HepG2 (cell line): ENCODE measurements at regions of chr14 and their contacts with region 1.

Region 1: DNA sequence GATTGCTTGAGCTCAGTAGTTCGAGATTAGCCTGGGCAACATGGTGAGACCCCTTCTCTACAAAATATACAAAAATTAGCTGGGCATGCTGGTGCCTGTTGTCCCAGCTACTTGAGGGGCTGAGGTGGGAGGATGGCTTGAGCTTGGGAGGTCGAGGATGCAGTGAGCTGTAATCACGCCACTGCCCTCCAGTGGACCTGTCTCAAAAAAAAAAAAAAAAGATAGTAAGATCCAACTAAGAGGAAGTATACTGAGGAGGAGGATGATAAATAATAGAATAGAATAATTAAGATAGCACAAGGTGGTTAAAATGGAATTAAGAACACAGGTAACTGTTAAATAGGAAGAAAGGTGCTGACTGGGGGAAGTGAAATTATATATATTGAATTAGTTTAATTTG is 37.0 kb upstream of the BAZ1A start:
- DNase-seq: peak; percentile 34
- ATAC-seq: peak; percentile 71
- H3K4me3 ChIP-seq: no peak overlapping the region
- H3K27ac ChIP-seq: no peak overlapping the region
- H3K4me1 ChIP-seq: no peaks in the 10 kb centered on the region
- H3K27me3 ChIP-seq: no peaks in the 10 kb centered on the region
- CTCF ChIP-seq: peak; percentile 48
- EP300 ChIP-seq: no peak
- POLR2A ChIP-seq: no peak
- RAD21 ChIP-seq: 0 out of 2 replicates have a peak, but pooled peaks have one; percentile 7

Region 2: GRCh38 chr14:34678306-34678705 is 233.9 kb before region 1 on chr14:
- CTCF ChIA-PET with region 1: no interaction called
- POLR2A ChIA-PET with region 1: no interaction called
- in situ Hi-C with region 1: no loop called
- intact Hi-C with region 1: loop called (anchors 10 kb)
- DNase-seq: no peak
- ATAC-seq: no peak
- H3K4me3 ChIP-seq: no peak overlapping the region
- H3K27ac ChIP-seq: no peak overlapping the region
- H3K4me1 ChIP-seq: peaks cover 35% of the 10 kb centered on the region
- H3K27me3 ChIP-seq: peaks cover 0 to 2% of the 10 kb centered on the region in 2 experiments; a peak in 3 of 5 replicates
- CTCF ChIP-seq: no peak
- EP300 ChIP-seq: no peak
- POLR2A ChIP-seq: no peak
- RAD21 ChIP-seq: no peak

Region 3: DNA sequence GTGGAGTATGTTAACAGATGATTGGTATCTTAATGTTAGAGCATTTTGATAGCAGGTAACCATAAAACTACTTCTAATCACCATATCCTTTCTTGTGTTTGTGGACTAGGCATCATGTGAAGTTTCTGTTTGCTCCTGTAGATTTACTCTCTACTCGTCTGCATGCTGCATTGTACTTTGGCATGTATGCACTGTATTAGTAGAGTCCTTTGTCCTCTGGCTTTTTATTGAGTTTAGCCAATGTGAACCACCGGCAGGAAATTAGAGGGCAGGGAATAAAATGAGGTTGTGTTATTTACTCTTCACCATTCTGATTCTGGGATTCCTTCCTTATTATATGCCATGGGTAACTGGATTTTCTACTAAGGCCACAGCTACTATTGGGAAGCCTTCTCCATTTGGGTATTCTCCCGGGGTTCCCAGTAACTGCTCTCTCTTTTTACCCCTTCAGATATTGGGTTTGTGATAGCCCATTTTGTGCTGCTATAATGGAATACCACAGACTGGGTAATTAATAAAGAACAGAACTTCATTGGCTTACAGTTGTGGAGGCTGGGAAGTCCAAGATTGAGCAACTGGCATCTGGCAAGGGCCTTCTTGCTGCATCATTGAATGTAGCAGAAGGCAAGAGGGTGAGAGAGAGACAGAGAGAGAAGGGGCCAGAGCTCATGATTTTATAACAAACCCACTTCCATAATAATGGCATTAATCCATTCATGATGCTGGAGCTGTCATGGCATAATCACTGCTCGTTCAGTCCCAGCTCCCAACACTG is 156.2 kb after region 1 on chr14:
- CTCF ChIA-PET with region 1: no interaction called
- POLR2A ChIA-PET with region 1: no interaction called
- in situ Hi-C with region 1: no loop called
- intact Hi-C with region 1: no loop called
- DNase-seq: no peak
- ATAC-seq: peak; percentile 76
- H3K4me3 ChIP-seq: no peak overlapping the region
- H3K27ac ChIP-seq: no peak overlapping the region
- H3K4me1 ChIP-seq: peaks cover 9% of the 10 kb centered on the region; the same call in 1 of the 2 replicates
- H3K27me3 ChIP-seq: no peaks in the 10 kb centered on the region
- CTCF ChIP-seq: no peak
- EP300 ChIP-seq: no peak
- POLR2A ChIP-seq: no peak
- RAD21 ChIP-seq: no peak